Heart right ventricle (tissue), 16 donors: ENCODE measurements at regions of chr10 and their contacts with region 1.

Region 1: DNA sequence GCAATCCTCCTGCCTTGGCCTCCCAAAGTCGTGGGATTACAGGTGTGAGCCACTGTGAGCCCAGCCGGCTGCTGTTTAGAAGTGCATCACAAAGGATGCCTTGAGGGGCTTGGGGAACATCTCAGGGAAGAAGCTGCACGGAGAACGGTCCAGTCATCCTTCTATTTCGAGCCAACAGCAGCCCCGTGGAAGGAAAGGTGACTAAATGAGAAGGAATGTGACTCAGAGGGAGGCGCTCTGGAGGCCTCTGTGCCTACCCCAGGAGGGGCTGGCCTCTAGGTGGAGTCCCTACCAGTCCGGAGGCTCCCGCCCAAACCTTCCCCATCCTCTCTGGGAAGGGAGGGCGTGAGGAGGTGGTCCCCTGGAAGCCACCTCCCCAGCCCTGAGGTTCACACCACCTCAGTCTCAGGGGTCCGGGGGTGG is 76.2 kb downstream of the CTBP2 start:
- DNase-seq: peak; percentile 31 to 50
- ATAC-seq: peak; percentile 44 to 83 (median 73)
- H3K4me3 ChIP-seq: peak overlapping the region in 1 of 10 donors; percentile 17
- H3K27ac ChIP-seq: peak overlapping the region; percentile 54 to 89 (median 80)
- H3K4me1 ChIP-seq: peaks cover 17 to 76% (median 50%) of the 10 kb centered on the region in 9 donors
- H3K27me3 ChIP-seq: no peaks in the 10 kb centered on the region
- CTCF ChIP-seq: peak in 2 of 9 donors; percentile 15 to 22

Region 2: DNA sequence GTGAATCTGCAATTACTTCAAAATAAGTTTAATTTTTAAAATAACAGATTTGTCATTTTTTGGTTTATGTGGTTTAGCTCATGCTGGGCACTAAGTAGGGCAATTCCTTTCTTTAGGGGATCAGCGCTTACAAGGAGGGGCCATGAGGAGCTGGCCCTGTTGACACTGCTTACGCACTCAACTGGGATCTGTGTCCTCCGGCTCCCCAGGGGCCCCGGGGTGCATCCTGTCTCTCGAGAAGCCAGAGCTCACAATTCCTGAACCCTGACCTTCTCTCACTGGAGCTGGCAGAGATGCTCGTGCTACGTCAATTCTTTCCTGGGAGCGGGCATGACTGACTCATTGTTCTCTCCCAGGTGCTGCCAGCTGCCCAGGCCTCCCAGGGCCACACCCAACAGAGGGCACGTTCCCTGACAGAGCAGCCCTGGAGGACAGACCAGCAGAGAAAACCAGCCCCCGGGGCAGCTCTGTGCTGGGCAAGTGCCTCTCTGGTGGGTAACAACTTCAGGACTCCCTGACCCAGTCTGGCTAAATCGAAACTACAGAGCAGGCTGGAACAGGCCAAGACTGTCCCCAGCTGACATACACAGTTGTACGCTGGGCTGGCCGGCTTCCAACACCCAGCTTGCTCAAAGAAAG is 39.4 kb after region 1 on chr10:
- intact Hi-C with region 1: loop called in 2 of 10 experiments (anchors 5 kb)
- DNase-seq: peak; percentile 86 to 87
- ATAC-seq: peak; percentile 82 to 94 (median 86)
- H3K4me3 ChIP-seq: peak overlapping the region in 7 of 10 donors; percentile 5 to 38 (median 23)
- H3K27ac ChIP-seq: peak overlapping the region; percentile 48 to 91 (median 78)
- H3K4me1 ChIP-seq: peaks cover 21 to 97% (median 78%) of the 10 kb centered on the region in 9 donors
- H3K27me3 ChIP-seq: no peaks in the 10 kb centered on the region
- CTCF ChIP-seq: peak in 1 of 9 donors; percentile 12

Region 3: DNA sequence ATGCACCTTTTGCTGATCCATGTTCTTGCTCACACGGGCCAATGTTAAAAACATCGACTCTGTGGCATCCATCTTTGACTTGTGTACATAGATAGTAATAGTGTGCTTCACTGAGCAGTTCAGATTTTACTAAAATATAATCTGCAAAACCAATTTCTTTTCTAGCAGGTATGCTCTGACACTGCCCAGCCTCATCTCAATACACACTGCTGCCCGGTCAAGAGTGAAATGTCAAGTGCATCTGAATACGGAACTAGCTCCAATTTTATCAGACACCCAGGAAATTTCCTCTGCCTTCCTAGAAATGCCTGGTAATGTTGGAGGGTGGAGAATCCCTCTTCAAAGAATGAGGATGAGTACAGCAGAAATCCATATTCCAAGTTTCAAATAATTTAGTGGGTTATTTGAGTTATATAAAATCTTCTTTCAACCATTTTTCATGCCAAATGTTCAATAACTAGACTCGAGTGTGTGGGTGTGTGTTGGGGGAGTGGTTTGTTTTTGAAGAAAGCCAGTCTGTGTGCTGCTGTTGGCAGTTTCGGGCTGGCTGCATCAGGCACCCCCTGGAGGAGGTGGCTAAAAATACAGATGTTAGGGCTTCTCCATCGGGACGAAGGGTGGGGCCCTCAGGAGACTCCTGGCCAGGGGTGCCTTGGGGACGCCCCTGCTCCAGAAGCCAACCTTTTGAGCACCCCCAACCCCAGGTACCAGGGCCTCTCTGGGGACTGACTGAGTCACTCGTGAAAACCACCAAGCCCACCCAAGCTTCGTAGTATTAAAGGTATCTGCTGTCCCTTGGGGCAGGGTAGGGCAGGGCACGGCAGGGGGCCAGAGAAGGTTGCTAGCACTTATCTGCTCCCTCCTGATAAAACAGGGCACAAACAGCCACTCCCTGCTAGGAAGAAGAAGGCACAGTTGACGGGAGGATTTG is 60.8 kb after region 1 on chr10:
- intact Hi-C with region 1: loop called in 2 of 10 experiments (anchors 5 kb)
- DNase-seq: peak in 1 of 2 donors; percentile 44
- ATAC-seq: peak; percentile 40 to 67 (median 56)
- H3K4me3 ChIP-seq: peak overlapping the region in 5 of 10 donors; percentile 7 to 22 (median 10)
- H3K27ac ChIP-seq: peak overlapping the region in 9 of 10 donors; percentile 2 to 68 (median 55)
- H3K4me1 ChIP-seq: peaks cover 28 to 96% (median 69%) of the 10 kb centered on the region in 9 donors
- H3K27me3 ChIP-seq: no peaks in the 10 kb centered on the region
- CTCF ChIP-seq: peak in 8 of 9 donors; percentile 5 to 61 (median 50)

Region 4: GRCh38 chr10:125152450-125153368 is 68.5 kb after region 1 on chr10:
- intact Hi-C with region 1: loop called in 3 of 10 experiments (anchors 5 kb)
- DNase-seq: peak; percentile 65 to 76
- ATAC-seq: peak; percentile 56 to 93 (median 74)
- H3K4me3 ChIP-seq: peak overlapping the region in 2 of 10 donors; percentile 0 to 37
- H3K27ac ChIP-seq: peak overlapping the region in 9 of 10 donors; percentile 39 to 98 (median 67)
- H3K4me1 ChIP-seq: peaks cover 49 to 100% (median 85%) of the 10 kb centered on the region in 9 donors
- H3K27me3 ChIP-seq: no peaks in the 10 kb centered on the region
- CTCF ChIP-seq: peak in 1 of 9 donors; percentile 23